Activated CD4-positive, alpha-beta memory T cell treated with anti-CD3 and anti-CD28 coated beads for 36 hours (primary cell): ENCODE measurements at regions of chr7 and their contacts with region 1.

Region 1: GRCh38 chr7:87345166-87345927 is at the start of gene CROT:
- DNase-seq: peak; percentile 97
- H3K4me3 Mint-ChIP-seq: peak within 1 kb of the TSS; percentile 99
- H3K27ac Mint-ChIP-seq: peak within 1 kb of the TSS; percentile 95
- H3K4me1 Mint-ChIP-seq: peaks cover 28% of the 10 kb centered on the region
- H3K27me3 Mint-ChIP-seq: no peaks in the 10 kb centered on the region
- total RNA-seq, gene CROT: 8.5 to 9.6 TPM

Region 2: DNA sequence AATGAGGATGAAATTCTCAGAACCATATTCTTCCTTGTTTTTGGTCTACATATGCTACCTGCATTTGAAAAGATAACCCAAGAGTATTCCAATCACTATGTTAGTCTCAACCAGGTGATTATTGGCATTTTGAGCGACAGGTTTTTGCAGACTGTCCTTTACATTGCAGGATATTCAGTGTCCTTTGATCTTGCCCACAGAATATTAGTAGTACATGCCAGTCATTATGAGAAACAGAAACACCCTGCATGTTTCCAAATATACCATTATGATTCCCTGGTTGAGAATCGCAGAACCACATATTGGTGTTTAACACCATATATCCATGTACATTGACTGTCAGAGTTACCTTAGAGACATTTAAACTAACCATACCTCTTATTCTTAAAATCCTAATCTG is 156.4 kb before region 1 on chr7:
- CTCF ChIA-PET with region 1: no interaction called
- POLR2A ChIA-PET with region 1: no interaction called
- intact Hi-C with region 1: no loop called
- DNase-seq: no peak
- H3K4me3 Mint-ChIP-seq: no peak overlapping the region
- H3K27ac Mint-ChIP-seq: peak overlapping the region; percentile 2
- H3K4me1 Mint-ChIP-seq: peaks cover 28% of the 10 kb centered on the region
- H3K27me3 Mint-ChIP-seq: no peaks in the 10 kb centered on the region

Region 3: GRCh38 chr7:87312215-87312865 is 33.0 kb before region 1 on chr7:
- CTCF ChIA-PET with region 1: interaction called, 3 read pairs
- POLR2A ChIA-PET with region 1: no interaction called
- intact Hi-C with region 1: loop called (anchors 2 kb)
- DNase-seq: peak; percentile 52
- H3K4me3 Mint-ChIP-seq: no peak overlapping the region
- H3K27ac Mint-ChIP-seq: no peak overlapping the region
- H3K4me1 Mint-ChIP-seq: no peaks in the 10 kb centered on the region
- H3K27me3 Mint-ChIP-seq: no peaks in the 10 kb centered on the region

Region 4: DNA sequence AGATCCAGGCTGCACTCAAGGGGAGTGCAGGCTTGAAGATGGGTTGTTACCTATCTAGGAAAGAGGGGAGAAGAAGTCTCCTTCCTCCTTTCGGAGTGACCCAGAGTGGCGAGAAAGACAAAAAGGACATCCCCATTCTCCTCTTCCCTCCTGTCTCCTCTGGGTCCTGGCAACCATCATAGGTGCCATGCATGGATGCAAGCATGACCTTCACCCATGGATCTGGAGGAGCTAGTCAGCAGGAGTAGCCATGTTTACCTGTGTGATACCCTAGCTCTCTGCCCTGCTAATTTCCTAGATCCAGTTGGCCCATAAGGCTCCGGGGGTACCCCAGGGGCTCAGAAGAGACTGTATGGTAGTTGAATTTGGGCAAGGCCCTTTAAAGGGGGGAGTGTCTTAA is 17.1 kb before region 1 on chr7:
- CTCF ChIA-PET with region 1: no interaction called
- POLR2A ChIA-PET with region 1: no interaction called
- intact Hi-C with region 1: no loop called
- DNase-seq: no peak
- H3K4me3 Mint-ChIP-seq: no peak overlapping the region
- H3K27ac Mint-ChIP-seq: no peak overlapping the region
- H3K4me1 Mint-ChIP-seq: no peaks in the 10 kb centered on the region
- H3K27me3 Mint-ChIP-seq: no peaks in the 10 kb centered on the region

Region 5: DNA sequence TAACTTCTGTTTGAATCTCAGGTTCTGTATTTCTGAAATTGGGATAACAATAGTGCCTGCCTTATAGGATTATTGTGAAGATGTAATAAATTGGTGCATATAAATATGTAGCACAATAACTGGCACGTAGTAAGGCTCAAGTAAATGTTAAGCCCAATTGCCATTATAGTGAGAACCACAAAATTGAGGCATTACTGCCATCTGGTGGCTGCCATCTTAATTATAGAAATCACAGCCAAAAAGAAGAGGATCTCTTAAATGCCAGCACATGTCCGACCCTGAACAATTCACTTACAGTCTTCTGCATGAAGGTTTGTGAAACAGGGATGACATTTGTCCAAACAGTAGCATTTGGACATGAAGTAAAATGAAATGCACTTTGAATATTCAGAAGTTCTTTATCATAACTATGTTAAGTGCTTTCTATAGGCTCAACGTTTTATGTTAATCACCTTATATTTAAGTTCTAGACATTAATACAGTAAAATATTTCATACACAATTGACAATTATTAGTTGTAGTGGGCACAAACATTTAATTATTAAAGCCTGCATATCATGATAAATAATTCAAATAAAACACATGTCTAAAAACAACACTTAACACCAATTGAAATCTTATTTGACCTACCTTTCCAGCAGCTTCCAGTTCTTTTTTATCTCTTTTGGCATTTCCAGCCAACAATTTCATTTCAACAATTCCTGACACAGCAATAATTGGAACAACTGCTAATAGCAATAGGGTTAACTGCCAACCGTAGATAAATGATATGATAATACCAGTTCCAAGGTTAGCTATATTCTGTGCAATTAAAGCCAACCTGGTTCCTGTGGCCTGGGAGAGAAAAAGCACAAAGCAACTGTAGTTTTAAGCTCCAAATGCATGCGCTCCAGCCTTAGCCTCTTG is 71.6 kb after region 1 on chr7:
- CTCF ChIA-PET with region 1: interaction called, 16 read pairs
- POLR2A ChIA-PET with region 1: no interaction called
- intact Hi-C with region 1: no loop called
- DNase-seq: peak; percentile 66
- H3K4me3 Mint-ChIP-seq: no peak overlapping the region
- H3K27ac Mint-ChIP-seq: no peak overlapping the region
- H3K4me1 Mint-ChIP-seq: no peaks in the 10 kb centered on the region
- H3K27me3 Mint-ChIP-seq: no peaks in the 10 kb centered on the region

Region 6: DNA sequence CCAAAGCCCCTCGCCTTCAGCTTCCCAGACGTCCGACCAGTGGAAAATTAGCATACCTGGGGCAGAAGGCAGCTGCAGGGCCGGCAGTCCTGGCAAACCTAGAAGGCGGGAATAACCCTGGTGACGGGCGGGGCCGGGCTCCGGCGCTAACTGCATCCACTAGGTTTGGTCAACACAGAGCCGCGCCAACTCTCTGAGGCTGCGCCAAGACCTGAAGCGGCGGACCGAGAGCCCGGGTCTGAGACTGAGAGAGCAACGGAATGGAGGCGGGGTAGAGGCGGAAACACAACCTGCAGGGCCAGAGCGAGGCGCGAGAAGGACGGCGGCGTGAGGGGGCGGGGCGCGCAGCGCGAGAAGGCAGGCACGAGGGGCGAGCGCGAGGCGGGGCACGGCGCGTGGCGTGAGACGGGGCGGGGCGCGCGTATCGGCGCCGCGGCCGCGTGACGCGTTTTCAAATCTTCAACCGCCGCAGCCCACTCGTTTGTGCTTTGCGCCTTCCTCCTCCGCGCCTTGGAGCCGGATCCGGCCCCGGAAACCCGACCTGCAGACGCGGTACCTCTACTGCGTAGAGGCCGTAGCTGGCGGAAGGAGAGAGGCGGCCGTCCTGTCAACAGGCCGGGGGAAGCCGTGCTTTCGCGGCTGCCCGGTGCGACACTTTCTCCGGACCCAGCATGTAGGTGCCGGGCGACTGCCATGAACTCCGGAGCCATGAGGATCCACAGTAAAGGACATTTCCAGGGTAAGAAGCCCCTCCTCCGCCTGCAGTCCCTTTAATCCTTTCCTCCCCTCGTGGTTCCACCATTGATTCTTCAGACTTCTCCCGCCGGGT is 530.9 kb after region 1 on chr7 and contains the starts of genes DBF4 and SLC25A40:
- CTCF ChIA-PET with region 1: no interaction called
- POLR2A ChIA-PET with region 1: no interaction called
- intact Hi-C with region 1: loop called (anchors 2 kb)
- DNase-seq: peak; percentile 97
- H3K4me3 Mint-ChIP-seq: peak within 1 kb of the TSS; percentile 77
- H3K27ac Mint-ChIP-seq: peak within 1 kb of the TSS; percentile 93
- H3K4me1 Mint-ChIP-seq: peaks cover 43% of the 10 kb centered on the region
- H3K27me3 Mint-ChIP-seq: no peaks in the 10 kb centered on the region
- total RNA-seq, gene DBF4: 75.8 to 78.4 TPM
- total RNA-seq, gene SLC25A40: 47.9 to 54.9 TPM

Region 7: GRCh38 chr7:88219781-88220747 is 874.7 kb after region 1 on chr7 and contains the start of gene SRI:
- CTCF ChIA-PET with region 1: no interaction called
- POLR2A ChIA-PET with region 1: no interaction called
- intact Hi-C with region 1: loop called (anchors 10 kb)
- DNase-seq: peak; percentile 92
- H3K4me3 Mint-ChIP-seq: peak within 1 kb of the TSS; percentile 87
- H3K27ac Mint-ChIP-seq: peak within 1 kb of the TSS; percentile 89
- H3K4me1 Mint-ChIP-seq: peaks cover 15% of the 10 kb centered on the region
- H3K27me3 Mint-ChIP-seq: no peaks in the 10 kb centered on the region
- total RNA-seq, gene SRI: 219 to 220 TPM